Activated CD8-positive, alpha-beta T cell treated with anti-CD3 and anti-CD28 coated beads, Interleukin-2, amount 10 ng/mL, durations not matched to agents 7 days and 5 days (primary cell): ENCODE measurements at regions of chr1 and their contacts with region 1.

Region 1: DNA sequence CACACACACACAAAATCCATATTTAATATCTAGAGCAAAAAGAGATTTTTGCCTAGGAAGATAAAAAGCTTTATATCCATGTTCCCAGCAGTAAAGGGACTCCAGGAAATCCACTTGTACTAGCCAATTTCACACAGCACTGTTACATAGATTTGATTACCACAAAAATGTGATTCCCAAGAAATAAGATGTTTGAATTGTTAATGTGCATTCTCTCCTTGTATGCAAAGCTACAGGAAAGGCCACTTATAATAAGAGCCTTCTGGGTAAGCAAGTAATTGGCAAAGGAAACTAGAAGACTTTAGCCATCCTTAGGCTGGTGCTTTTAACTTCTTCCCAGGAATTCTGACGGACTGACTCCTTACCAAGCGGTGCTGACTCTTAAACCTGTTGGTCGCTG is 89.3 kb downstream of the LBR start:
- DNase-seq: no peak
- ATAC-seq: no peak
- H3K4me3 Mint-ChIP-seq: no peak overlapping the region
- H3K27ac Mint-ChIP-seq: no peak overlapping the region
- H3K4me1 Mint-ChIP-seq: no peaks in the 10 kb centered on the region
- H3K27me3 Mint-ChIP-seq: peaks cover 10% of the 10 kb centered on the region

Region 2: DNA sequence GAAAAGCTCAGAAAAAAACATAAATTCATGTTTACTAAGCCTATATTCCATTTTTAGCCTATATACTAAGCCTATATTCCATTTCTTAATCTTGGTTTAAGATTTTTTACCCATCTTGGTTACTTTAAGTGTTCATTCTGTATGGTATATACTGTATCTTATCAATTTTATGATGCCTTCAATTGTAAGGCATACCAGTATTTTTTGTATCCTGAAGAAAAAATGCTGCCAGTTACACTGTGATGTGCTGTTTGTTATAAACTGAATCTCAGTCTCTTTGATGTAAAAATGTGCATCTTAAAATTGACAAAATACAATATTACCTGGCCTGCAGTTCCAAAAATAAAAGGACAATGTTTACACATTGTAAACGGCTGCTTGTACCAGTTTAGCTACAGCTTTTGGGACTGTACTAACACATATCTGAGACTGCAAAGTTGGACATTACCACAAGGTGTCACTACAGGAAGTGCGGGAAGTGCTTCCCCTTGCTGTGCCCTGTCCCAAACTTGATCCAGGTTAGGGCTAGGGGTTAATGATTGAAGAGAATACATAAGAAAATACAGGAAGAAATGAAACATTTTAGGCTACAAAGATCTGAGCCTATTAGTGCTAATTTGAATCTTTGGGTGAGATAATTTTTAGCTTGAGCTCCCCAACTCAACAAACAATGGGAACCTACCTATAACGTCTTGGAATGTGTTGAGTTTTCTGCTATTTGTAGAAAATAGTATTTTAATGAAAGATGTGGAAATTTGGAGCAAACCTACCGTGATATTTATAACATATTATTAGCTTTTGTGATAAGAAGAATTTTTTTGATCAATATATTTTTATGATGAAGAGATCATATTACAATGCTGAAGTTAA is 19.6 kb before region 1 on chr1:
- CTCF ChIA-PET with region 1: interaction called, 10 read pairs
- POLR2A ChIA-PET with region 1: no interaction called
- DNase-seq: peak; percentile 42
- ATAC-seq: peak; percentile 61
- H3K4me3 Mint-ChIP-seq: no peak overlapping the region
- H3K27ac Mint-ChIP-seq: no peak overlapping the region
- H3K4me1 Mint-ChIP-seq: no peaks in the 10 kb centered on the region
- H3K27me3 Mint-ChIP-seq: peaks cover 2% of the 10 kb centered on the region

Region 3: DNA sequence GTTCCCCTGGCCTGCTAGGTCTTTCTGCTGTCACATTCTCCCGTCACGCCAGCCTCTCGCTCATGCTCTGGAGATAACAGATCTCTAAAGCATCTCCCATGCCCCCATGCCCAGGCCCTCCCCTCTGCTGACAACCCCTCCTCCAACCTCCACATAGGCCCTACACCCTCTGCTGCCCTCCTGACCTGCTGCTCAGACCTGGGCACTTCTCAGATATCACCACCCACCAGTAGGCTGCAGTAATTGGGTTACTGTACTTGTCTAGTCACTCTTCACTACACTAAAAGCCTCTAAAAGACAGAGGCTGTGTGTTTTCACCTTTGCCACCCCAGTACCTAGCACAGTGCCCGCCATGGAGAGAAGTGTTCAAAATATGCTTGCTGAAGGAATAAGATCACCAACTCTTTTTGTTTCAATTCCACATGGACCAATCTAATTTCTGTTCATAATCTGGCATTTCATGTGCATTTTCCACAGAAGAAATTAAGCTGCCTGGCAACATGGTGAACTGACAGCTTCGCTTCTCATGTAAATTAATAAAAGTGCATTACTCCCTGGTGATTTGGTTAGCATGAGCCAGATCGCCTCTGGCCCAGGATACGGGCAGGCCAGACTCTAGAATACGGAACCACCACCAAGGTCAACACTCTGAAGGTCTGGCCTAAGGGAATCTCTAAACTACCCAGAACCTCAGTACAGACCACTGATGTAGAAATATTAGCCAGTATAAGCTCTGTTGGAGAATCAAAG is 68.6 kb after region 1 on chr1:
- CTCF ChIA-PET with region 1: no interaction called
- POLR2A ChIA-PET with region 1: no interaction called
- DNase-seq: no peak
- ATAC-seq: no peak
- H3K4me3 Mint-ChIP-seq: no peak overlapping the region
- H3K27ac Mint-ChIP-seq: peak overlapping the region; percentile 8
- H3K4me1 Mint-ChIP-seq: no peaks in the 10 kb centered on the region
- H3K27me3 Mint-ChIP-seq: no peaks in the 10 kb centered on the region